Panc1 (cell line): ENCODE measurements at regions of chr12 and their contacts with region 1.

Region 1: DNA sequence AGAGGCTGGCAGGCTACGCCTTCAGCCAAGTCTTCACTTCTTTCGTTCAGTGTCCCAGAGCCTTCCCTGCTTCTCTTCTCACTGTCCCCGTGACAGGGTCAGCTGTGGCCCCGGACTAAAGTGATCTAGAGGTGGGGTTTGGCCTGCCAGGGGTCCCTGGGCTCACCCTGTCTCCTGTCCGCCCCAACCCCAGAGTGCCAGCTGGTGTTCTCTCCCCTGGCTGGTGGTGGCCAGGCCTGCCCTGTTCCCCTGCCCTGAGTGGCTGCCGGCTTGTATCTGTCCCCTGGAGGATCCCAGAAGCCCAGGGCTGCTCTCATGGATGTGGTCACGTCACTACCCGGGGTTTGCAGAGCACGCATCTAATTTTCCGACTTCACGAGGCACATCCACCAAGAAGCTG is 297.4 kb downstream of the GLT1D1 start:
- DNase-seq: no peak
- ATAC-seq: no peak
- H3K4me3 ChIP-seq: no peak overlapping the region
- H3K27ac ChIP-seq: no peak overlapping the region
- H3K4me1 ChIP-seq: no peaks in the 10 kb centered on the region
- H3K27me3 ChIP-seq: no peaks in the 10 kb centered on the region; the same call in 1 of the 2 replicates
- CTCF ChIP-seq: no peak

Region 2: DNA sequence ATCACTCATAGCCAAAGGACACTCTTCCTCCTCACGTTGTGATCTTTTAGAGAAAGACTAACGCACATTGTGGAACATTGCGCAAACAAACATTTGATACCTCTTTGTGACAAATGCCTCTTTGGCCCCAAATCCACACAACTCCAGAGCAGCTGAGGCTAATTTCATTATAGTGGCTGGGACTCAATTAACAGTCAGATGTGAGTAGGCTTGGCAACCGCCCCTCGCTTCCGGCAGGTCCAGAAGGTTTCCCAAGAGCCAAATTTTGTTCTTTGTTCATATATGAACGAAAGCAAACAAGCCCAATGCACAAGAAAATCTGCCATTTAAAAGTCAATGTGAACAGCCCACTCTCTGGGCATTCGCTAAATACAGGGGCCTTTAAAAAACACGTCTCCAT is 23.5 kb before region 1 on chr12:
- CTCF ChIA-PET with region 1: interaction called, 11 read pairs
- POLR2A ChIA-PET with region 1: no interaction called
- in situ Hi-C with region 1: no loop called
- intact Hi-C with region 1: no loop called
- DNase-seq: no peak
- ATAC-seq: no peak
- H3K4me3 ChIP-seq: no peak overlapping the region
- H3K27ac ChIP-seq: no peak overlapping the region
- H3K4me1 ChIP-seq: no peaks in the 10 kb centered on the region
- H3K27me3 ChIP-seq: no peaks in the 10 kb centered on the region
- CTCF ChIP-seq: no peak